Activated T-helper 1 cell treated with anti-CD3 and anti-CD28 coated beads, Interleukin-12 subunit alpha, Interleukin-12 subunit beta, Interleukin-2, Interleukin-4 antibody, amounts not matched to agents 30 ng/mL and 10 ng/mL and 1 ng/mL, durations not matched to agents 14 hours and 24 hours and 36 hours (primary cell): ENCODE measurements at regions of chr3 and their contacts with region 1.

Region 1: GRCh38 chr3:168061332-168061996 is 34.3 kb downstream of the GOLIM4 start:
- DNase-seq: no peak
- H3K4me3 Mint-ChIP-seq: no peak overlapping the region
- H3K27ac Mint-ChIP-seq: no peak overlapping the region
- H3K4me1 Mint-ChIP-seq: peaks cover 9% of the 10 kb centered on the region
- H3K27me3 Mint-ChIP-seq: peaks cover 6% of the 10 kb centered on the region

Region 2: DNA sequence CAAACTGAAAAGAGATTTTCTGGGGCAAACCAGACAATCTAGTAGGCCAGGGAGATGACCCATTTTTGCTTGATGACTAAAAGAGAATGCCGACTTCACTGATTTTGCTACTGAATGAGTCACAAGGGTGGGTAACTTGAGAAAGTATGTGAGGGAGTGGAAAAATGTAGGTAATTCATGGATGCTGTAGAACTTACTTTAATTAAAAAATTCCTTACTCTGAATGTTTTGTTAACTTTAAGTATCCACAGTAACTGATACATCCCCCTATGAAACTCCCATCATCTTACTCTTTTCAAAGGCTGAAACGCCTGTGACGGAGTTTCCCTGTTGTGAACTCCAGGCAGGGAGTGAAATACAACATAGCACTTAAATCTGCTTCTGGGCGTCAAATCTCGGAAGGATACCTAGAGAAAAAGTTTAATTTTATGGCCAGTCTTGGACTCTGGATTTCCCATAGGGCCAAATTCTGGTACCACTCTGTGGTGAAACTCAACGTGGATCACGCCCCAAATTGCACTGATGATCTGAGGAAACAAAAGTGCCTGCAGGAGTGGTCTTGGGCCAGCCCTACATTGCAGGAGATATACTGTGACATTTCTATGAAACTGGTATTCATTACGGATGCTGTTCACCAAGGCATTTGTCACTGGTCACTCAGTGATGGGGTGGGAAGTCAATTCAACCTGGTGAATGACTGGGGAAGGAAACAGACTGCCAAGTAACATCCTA is 10.3 kb after region 1 on chr3:
- intact Hi-C with region 1: loop called (anchors 1 kb)
- DNase-seq: no peak
- H3K4me3 Mint-ChIP-seq: no peak overlapping the region
- H3K27ac Mint-ChIP-seq: no peak overlapping the region
- H3K4me1 Mint-ChIP-seq: peaks cover 10% of the 10 kb centered on the region
- H3K27me3 Mint-ChIP-seq: peaks cover 2% of the 10 kb centered on the region